HEK293T (cell line): ENCODE measurements at regions of chr2 and their contacts with region 1.

Region 1: DNA sequence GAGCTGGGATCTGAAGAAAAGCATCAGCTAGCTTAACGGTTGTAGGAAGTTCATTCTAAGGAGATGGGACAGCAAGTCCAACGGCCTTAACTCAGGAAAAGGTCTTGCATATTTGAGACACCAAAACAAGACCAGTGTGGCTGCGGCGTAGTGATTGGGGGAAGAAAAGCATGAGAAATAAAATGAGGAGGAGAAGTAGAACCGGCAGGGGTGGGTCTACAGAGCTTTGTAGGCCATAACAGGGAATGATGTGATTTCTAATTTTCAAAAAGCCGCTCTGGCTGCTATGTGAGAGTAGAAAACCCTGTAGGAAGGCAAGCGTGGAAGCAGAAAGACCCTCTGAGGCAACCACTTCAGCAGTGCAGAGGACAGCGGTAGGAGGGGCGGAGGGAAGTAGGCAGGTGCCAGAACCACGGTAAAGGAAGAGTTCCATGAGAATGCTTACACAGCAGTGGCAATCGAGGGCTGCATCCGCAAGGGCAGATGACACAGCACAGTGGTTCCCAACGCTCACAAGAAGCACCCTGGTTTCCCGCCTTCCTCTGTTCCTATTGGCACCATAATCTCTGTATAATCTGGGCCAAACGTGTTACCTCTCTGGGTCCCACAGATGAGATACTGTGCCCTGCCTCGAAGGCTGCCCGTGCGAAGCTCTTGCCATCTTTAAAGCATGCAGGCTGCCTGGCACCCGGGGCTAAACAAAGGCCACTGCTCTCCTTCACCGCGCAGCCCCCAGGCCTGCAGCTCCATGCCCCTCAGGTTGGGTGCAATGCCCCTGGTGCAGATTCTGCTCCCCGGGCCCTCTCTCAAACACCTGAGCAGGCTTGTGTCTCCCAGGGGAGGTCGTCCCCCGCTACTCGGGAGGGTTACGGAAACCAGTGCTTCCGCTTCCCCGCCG is 791 bp downstream of the ANKRD39 start:
- DNase-seq: no peak

Region 2: GRCh38 chr2:96842600-96842999 is 14.4 kb before region 1 on chr2:
- CTCF ChIA-PET with region 1: interaction called, 7 read pairs
- POLR2A ChIA-PET with region 1: interaction called, 10 read pairs
- DNase-seq: no peak

Region 3: DNA sequence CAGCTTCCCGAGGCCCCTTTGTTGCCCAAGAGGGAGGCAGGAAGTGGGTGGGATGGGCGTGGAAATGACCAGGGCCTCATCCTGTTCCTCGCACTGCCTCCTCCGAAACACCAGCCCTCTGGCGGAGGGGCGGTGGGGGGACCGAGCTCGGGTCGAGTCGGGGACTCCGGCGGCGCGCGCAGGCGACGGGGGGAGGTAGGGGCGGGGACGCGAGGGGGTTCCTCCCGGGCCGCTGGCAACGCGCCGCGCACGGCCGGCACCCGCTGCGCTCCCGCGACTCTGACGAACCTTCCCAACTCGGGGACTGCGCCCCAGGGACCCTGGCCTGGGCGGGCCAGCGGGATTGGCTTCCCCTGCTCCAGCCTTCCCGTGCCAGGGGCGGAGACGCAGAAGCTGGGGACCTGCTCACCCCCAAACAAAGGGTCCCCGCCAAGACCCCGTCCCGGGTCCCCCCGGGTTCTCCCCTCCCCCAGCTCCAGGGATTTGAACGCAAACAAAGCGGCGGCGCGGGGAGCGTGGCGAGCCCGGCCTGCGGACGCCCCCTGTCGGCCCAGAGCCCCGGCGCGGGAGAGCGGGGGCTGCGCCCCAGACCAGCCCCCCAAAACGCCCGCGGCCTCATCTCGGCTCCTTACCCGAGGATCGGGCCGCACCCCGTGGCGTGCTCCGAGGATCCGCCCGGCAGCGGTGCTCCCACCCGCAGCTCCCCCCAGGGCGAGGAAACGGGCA is 11.7 kb after region 1 on chr2:
- CTCF ChIA-PET with region 1: interaction called, 17 read pairs
- POLR2A ChIA-PET with region 1: interaction called, 58 read pairs
- DNase-seq: peak; percentile 83

Region 4: DNA sequence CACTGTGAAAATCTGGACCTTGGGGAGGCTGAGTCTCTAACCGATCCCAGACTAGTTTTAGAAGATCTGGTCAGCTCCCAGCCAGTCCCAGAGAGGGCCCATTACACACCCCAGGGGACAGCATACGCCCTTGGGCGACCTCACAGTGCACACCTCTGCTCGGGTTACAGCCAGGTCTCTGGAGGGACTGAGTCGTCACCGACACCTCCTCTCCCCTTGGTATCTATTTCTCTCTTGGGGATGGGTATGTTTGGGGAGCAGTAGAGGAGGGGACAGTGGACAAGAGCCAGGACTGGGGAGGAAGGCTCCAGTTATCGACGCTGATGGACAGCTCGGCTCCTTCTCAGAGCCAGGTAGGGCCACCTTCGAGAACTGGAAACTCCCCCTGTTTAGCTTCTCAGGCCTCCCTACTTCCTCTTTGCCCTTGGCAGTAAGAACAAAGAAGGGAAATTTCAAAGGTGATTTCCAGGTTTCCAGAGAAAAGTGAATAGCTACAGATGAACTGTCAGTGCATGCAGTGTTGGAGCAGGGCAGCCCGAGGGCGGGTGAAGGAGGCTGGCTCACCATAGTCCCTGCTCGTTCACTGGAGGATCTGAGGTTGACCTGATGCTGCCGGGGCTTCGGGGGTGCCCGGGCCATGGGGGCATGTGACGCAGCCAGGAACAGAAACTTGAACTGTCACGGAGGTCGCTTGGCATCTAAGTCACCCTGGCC is 17.2 kb after region 1 on chr2:
- CTCF ChIA-PET with region 1: interaction called, 17 read pairs
- POLR2A ChIA-PET with region 1: interaction called, 58 read pairs
- DNase-seq: no peak

Region 5: DNA sequence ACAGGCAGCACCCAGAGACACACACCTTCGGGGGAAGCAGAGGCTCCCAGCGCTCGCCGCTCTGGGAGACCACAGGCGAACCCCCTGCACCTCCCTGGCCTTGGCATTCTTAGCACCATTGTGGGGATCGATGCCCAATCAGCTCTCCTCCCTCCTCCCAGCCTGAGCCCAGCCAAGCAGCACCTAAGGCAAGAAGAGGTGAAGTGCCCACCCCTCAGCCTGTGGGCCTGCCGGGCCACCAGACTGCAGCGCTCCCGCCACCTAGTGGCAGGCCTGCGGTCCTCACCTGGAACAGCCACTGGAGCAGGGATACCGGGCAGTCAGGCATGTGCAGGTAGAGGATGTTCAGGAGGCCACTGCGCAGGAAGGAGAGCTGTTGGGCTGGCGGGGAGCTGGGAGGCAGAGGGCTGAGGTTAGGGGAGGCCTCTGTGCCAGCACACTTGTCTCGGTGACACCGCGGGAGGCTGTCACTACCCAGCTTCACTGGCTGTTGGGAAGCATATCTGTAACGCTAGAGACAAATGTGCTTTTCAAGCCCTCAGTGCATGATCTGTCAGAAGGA is 94.1 kb after region 1 on chr2:
- CTCF ChIA-PET with region 1: interaction called, 35 read pairs
- POLR2A ChIA-PET with region 1: interaction called, 26 read pairs
- DNase-seq: peak; percentile 89

Region 6: DNA sequence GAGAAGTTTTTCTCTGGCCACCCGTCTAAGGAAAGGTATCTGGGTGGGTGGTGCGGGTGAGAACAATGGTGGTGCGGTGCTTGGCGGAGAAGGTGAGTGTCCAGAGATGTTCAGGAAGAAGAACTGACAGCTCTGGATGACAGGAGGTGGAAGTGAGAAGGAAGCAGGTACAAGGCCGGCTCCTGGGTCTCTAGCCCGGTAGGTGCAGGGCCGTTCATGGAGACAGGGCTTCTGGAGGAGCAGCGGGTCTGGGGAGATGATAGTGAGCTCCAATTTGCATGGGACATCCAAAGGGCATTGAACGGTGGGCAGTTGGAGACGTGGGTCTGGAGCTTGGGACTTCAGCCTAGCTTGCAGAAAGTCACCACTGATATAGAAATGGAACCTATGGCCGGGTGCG is 238.6 kb after region 1 on chr2:
- CTCF ChIA-PET with region 1: no interaction called
- POLR2A ChIA-PET with region 1: no interaction called
- DNase-seq: no peak